Endothelial cell of umbilical vein (primary cell): ENCODE measurements at regions of chr9 and their contacts with region 1.

Region 1: DNA sequence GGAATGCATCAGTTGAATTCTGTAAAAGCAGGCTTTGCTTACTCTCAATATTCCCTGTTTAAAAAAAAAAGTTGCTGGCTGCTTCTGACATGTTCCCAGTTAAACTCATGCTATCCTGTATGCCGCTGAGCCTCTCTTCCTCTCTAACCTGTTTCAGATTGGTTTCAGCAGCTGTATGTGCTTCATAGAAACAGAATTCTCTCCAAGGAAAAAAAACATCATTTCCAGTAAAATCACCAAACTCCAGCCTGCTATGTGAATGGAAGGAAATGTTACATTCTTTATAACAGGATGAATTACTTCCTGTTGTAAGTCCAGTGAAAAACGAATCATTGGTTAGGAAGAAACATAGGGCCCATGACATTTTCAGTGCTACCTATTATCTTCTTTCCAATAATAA is 25.7 kb upstream of the KCNV2 start:
- DNase-seq: peak; percentile 88
- H3K4me3 ChIP-seq: no peak overlapping the region
- H3K27ac ChIP-seq: peak overlapping the region; percentile 35
- H3K4me1 ChIP-seq: peaks cover 23% of the 10 kb centered on the region
- H3K27me3 ChIP-seq: no peaks in the 10 kb centered on the region
- CTCF ChIP-seq: no peak
- POLR2A ChIP-seq: no peak

Region 2: DNA sequence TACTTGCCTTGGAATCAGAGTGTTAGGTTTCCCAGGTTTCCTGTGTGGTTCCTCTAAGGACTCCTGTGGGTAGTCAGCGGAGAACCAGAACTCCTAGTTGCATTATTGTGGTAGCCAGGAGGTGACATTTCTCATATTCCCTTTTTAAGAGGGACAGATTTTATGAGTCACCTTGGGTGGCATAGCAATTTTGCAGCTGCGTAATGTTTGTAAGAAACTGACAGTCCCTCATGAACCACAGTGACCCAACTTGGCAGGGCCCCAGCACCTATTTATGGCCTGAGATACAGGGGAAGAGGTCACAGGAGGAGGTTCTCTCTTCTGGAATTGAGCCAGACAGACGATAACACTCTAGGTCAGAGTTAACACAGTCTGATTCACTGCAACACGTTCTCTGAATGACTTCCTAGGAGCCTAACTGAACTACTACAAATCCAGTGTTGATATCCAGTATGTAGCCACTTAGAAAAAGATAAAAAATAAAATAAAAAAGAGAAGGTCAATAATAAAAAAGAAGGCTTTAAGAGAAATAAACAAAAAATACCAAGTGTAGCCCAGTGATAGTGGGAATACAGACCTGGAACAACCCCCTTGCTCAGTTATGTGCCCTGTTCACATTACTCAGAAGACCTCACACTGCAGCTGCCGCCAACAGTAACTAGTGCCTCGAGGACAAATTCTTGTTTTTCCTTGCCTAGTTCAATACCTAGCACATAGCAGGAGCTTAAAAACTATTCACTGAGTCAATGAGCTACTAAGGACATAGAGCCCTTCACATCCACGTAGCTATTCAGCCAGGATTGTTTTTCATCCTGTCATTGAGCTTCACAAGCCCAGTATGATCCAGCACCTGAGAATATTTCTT is 120.8 kb before region 1 on chr9:
- CTCF ChIA-PET with region 1: no interaction called
- POLR2A ChIA-PET with region 1: no interaction called
- dilution Hi-C with region 1: no loop called
- intact Hi-C with region 1: no loop called
- DNase-seq: peak; percentile 21
- H3K4me3 ChIP-seq: no peak overlapping the region
- H3K27ac ChIP-seq: no peak overlapping the region
- H3K4me1 ChIP-seq: no peaks in the 10 kb centered on the region
- H3K27me3 ChIP-seq: no peaks in the 10 kb centered on the region
- CTCF ChIP-seq: no peak
- POLR2A ChIP-seq: no peak

Region 3: DNA sequence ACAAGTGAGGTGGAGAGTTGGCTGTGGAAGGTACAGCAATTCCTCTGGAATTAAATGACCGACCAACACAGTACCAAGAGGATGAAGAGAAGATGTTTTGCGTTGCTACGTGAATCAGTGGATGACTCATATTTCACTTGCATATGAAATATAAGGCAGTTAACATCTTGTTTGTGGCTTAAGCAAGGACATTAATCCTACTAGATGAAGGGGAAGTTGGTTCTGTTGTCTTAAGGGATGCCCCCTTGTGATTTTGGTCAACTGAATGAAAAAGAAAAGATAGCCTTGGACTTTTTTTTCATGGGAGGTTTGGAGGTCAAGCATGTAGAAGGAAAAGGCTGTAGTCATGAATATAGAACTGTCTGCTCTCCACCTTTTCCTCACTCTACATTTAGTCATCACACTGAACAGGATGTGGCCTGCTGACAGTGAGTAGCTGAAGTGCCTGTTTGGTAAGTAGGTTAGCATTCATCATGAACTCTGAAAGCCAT is 36.2 kb before region 1 on chr9:
- CTCF ChIA-PET with region 1: no interaction called
- POLR2A ChIA-PET with region 1: no interaction called
- dilution Hi-C with region 1: no loop called
- intact Hi-C with region 1: loop called (anchors 1 kb)
- DNase-seq: peak; percentile 77
- H3K4me3 ChIP-seq: no peak overlapping the region
- H3K27ac ChIP-seq: peak overlapping the region; percentile 52
- H3K4me1 ChIP-seq: peaks cover 12% of the 10 kb centered on the region
- H3K27me3 ChIP-seq: no peaks in the 10 kb centered on the region
- CTCF ChIP-seq: no peak
- POLR2A ChIP-seq: no peak